ENCODE measurements at regions of chr5 and their contacts with region 1.

Region 1: GRCh38 chr5:114999176-114999575 is 170.5 kb downstream of the TRIM36 start:
- DNase-seq: no peak
- ATAC-seq: no peak
- H3K4me3 Mint-ChIP-seq: no peak overlapping the region
- H3K27ac Mint-ChIP-seq: no peak overlapping the region
- H3K4me1 Mint-ChIP-seq: no peaks in the 10 kb centered on the region
- H3K27me3 Mint-ChIP-seq: peaks cover 4% of the 10 kb centered on the region

Region 2: GRCh38 chr5:114988096-114988495 is 11.1 kb before region 1 on chr5:
- CTCF ChIA-PET with region 1: no interaction called
- POLR2A ChIA-PET with region 1: no interaction called
- intact Hi-C with region 1: loop called in 1 of 2 experiments (anchors 1 kb)
- DNase-seq: no peak
- ATAC-seq: no peak
- H3K4me3 Mint-ChIP-seq: no peak overlapping the region
- H3K27ac Mint-ChIP-seq: no peak overlapping the region
- H3K4me1 Mint-ChIP-seq: no peaks in the 10 kb centered on the region
- H3K27me3 Mint-ChIP-seq: peaks cover 3% of the 10 kb centered on the region